A673 (cell line): ENCODE measurements at regions of chr1 and their contacts with region 1.

Region 1: GRCh38 chr1:48596046-48596445 is 124.0 kb upstream of the SPATA6 start:
- DNase-seq: peak; percentile 77
- H3K4me3 ChIP-seq: no peak overlapping the region
- H3K27ac ChIP-seq: peak overlapping the region; percentile 18
- H3K4me1 ChIP-seq: peaks cover 12% of the 10 kb centered on the region
- H3K27me3 ChIP-seq: no peaks in the 10 kb centered on the region
- CTCF ChIP-seq: no peak

Region 2: GRCh38 chr1:47416319-47417169 is 1179.5 kb before region 1 on chr1:
- CTCF ChIA-PET with region 1: interaction called, 10 read pairs
- POLR2A ChIA-PET with region 1: no interaction called
- intact Hi-C with region 1: no loop called
- DNase-seq: no peak
- H3K4me3 ChIP-seq: no peak overlapping the region
- H3K27ac ChIP-seq: no peak overlapping the region
- H3K4me1 ChIP-seq: no peaks in the 10 kb centered on the region
- H3K27me3 ChIP-seq: peaks cover 70% of the 10 kb centered on the region
- CTCF ChIP-seq: no peak

Region 3: GRCh38 chr1:48236716-48237470 is 359.2 kb before region 1 on chr1:
- CTCF ChIA-PET with region 1: no interaction called
- POLR2A ChIA-PET with region 1: no interaction called
- intact Hi-C with region 1: no loop called
- DNase-seq: peak; percentile 19
- H3K4me3 ChIP-seq: no peak overlapping the region
- H3K27ac ChIP-seq: no peak overlapping the region
- H3K4me1 ChIP-seq: no peaks in the 10 kb centered on the region
- H3K27me3 ChIP-seq: no peaks in the 10 kb centered on the region
- CTCF ChIP-seq: peak; percentile 60

Region 4: GRCh38 chr1:48387409-48387808 is 208.6 kb before region 1 on chr1:
- CTCF ChIA-PET with region 1: no interaction called
- POLR2A ChIA-PET with region 1: no interaction called
- intact Hi-C with region 1: no loop called
- DNase-seq: no peak
- H3K4me3 ChIP-seq: no peak overlapping the region
- H3K27ac ChIP-seq: no peak overlapping the region
- H3K4me1 ChIP-seq: no peaks in the 10 kb centered on the region
- H3K27me3 ChIP-seq: no peaks in the 10 kb centered on the region
- CTCF ChIP-seq: no peak

Region 5: DNA sequence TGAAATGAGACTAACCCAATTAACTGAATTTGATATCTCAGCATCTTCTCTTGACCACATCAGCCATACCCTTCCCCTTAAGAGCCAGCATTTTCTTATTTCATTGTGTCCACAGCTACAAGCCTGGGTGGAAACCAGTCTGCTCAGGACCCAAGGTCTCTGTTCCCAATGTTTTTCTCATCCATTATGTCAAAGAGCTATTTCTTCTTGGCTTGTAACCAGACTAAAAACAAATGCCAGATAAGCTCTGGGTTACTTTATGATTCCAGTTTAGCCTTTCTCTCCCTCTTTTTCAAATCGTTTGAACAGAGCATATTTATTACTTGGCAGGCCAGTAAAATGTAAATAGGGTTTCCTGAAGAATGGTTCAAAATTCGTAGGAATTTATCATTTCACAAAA is 14.8 kb before region 1 on chr1:
- CTCF ChIA-PET with region 1: no interaction called
- POLR2A ChIA-PET with region 1: no interaction called
- intact Hi-C with region 1: no loop called
- DNase-seq: peak; percentile 64
- H3K4me3 ChIP-seq: no peak overlapping the region
- H3K27ac ChIP-seq: no peak overlapping the region
- H3K4me1 ChIP-seq: peaks cover 19% of the 10 kb centered on the region
- H3K27me3 ChIP-seq: no peaks in the 10 kb centered on the region
- CTCF ChIP-seq: no peak